ENCODE measurements at regions of chr12 and their contacts with region 1.

Region 1: GRCh38 chr12:7638760-7639555 is 26.8 kb downstream of the APOBEC1 start:
- DNase-seq: peak; percentile 77 to 86 (median 79)
- H3K4me3 ChIP-seq: peak overlapping the region; percentile 11 to 65 (median 43)
- H3K4me3 Mint-ChIP-seq: peak overlapping the region; percentile 61 to 90
- H3K27ac ChIP-seq: no peak overlapping the region
- H3K27ac Mint-ChIP-seq: peak overlapping the region; percentile 21 to 85 (median 61)
- H3K4me1 ChIP-seq: peaks cover 20 to 27% of the 10 kb centered on the region in 2 donors
- H3K4me1 Mint-ChIP-seq: peaks cover 28% of the 10 kb centered on the region
- H3K27me3 ChIP-seq: no peaks in the 10 kb centered on the region
- H3K27me3 Mint-ChIP-seq: peaks cover 0 to 5% (median 5%) of the 10 kb centered on the region in 3 donors
- CTCF ChIP-seq: peak; percentile 85

Region 2: DNA sequence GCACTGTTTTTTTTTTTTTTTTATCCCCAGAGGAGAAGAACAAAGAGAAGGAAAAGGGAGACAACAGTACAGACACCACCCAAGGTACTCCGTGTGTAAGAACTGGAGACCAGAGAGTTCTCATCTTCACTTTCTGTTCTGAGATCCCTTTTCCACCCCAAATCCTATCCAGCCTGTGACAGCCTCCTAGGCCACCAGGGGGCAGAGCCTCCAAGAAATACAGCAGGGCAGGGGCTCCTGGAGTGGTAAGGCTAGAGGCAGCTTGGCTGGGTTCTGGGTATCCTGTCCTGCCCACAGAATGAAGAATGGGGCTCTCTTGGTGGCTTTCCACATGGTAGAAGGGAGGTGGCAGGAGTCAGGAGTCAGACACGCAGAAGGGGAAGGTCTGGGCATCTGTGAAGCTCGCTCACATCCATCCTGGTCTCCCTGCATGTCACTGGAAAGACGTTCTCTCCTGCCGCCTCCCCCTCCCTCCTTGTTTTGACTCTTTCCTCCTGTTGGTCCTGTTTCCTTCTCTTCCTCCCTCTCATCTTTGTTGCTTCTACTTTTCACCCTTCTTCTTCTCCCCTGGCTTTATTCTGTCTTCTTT is 496.8 kb before region 1 on chr12:
- intact Hi-C with region 1: loop called in 1 of 2 experiments (anchors 5 kb)
- DNase-seq: peak; percentile 22 to 44 (median 37)
- H3K4me3 ChIP-seq: no peak overlapping the region
- H3K4me3 Mint-ChIP-seq: peak overlapping the region; percentile 13 to 32
- H3K27ac ChIP-seq: no peak overlapping the region
- H3K27ac Mint-ChIP-seq: peak overlapping the region in 2 of 7 donors; percentile 25 to 27
- H3K4me1 ChIP-seq: peaks cover 0 to 8% of the 10 kb centered on the region in 2 donors
- H3K4me1 Mint-ChIP-seq: peaks cover 10% of the 10 kb centered on the region
- H3K27me3 ChIP-seq: no peaks in the 10 kb centered on the region
- H3K27me3 Mint-ChIP-seq: peaks cover 0 to 1% (median 0%) of the 10 kb centered on the region in 3 donors
- CTCF ChIP-seq: peak; percentile 77

Region 3: DNA sequence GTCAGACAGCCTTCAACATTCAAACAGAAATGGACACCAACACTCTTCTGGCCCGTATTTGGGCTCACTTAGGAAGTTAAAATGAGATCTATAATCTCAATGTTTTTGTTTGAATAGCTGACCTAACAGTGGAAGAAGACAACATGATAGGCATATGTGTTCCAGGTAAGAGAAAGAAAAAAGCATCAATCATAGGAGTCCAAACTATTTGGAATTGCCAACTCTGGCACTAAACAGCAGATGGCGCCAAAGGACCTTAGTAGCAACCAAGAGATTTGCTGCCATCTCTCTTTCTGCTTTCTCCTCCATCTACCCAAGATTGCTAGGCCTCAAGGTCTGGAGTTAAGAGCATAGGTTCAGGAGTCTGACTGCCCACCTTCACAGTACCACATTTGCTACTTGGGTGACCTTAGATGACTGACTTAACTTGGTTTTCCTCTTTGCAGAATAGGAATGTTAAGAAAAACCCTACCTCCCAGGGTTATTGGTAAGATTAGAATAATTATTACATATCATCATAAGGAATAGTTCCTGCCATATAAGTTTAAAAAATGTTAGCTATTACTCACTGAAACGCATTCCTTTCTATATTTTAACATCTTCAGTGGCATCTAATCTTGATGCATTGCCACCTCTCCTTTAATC is 419.2 kb before region 1 on chr12:
- intact Hi-C with region 1: loop called (anchors 1 to 5 kb)
- DNase-seq: peak; percentile 54 to 75 (median 64)
- H3K4me3 ChIP-seq: no peak overlapping the region
- H3K4me3 Mint-ChIP-seq: no peak overlapping the region
- H3K27ac ChIP-seq: no peak overlapping the region
- H3K27ac Mint-ChIP-seq: no peak overlapping the region
- H3K4me1 ChIP-seq: no peaks in the 10 kb centered on the region
- H3K4me1 Mint-ChIP-seq: no peaks in the 10 kb centered on the region
- H3K27me3 ChIP-seq: no peaks in the 10 kb centered on the region
- H3K27me3 Mint-ChIP-seq: peaks cover 0 to 2% (median 0%) of the 10 kb centered on the region in 3 donors
- CTCF ChIP-seq: peak; percentile 85

Region 4: GRCh38 chr12:7374423-7375144 is 264.4 kb before region 1 on chr12:
- intact Hi-C with region 1: loop called in 1 of 2 experiments (anchors 5 kb)
- DNase-seq: peak; percentile 21 to 50 (median 36)
- H3K4me3 ChIP-seq: no peak overlapping the region
- H3K4me3 Mint-ChIP-seq: no peak overlapping the region
- H3K27ac ChIP-seq: no peak overlapping the region
- H3K27ac Mint-ChIP-seq: peak overlapping the region in 1 of 7 donors; percentile 57
- H3K4me1 ChIP-seq: no peaks in the 10 kb centered on the region
- H3K4me1 Mint-ChIP-seq: peaks cover 5% of the 10 kb centered on the region
- H3K27me3 ChIP-seq: no peaks in the 10 kb centered on the region
- H3K27me3 Mint-ChIP-seq: peaks cover 0 to 7% (median 0%) of the 10 kb centered on the region in 3 donors
- CTCF ChIP-seq: peak; percentile 63

Region 5: DNA sequence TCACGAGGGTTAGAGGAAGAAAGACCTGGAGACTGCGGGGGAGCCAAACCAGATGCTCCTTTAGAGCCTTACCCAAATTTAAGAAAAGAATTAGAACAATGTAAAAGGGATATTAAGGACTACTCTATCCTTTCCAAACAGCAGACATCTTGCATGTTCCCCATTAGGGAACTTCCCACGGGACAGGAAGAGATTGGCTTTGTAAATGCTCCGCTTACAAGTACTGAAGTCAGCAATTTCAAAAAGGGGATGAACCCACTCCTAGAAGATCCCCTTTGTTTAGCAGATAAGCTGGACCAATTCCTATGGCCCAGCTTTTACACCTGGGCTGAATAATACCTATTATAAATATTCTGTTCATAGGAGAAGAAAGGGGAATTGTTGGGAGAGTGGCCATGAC is 47.4 kb before region 1 on chr12:
- intact Hi-C with region 1: loop called in 1 of 2 experiments (anchors 5 kb)
- DNase-seq: no peak
- H3K4me3 ChIP-seq: no peak overlapping the region
- H3K4me3 Mint-ChIP-seq: no peak overlapping the region
- H3K27ac ChIP-seq: no peak overlapping the region
- H3K27ac Mint-ChIP-seq: no peak overlapping the region
- H3K4me1 ChIP-seq: peaks cover 9 to 10% of the 10 kb centered on the region in 2 donors
- H3K4me1 Mint-ChIP-seq: peaks cover 15% of the 10 kb centered on the region
- H3K27me3 ChIP-seq: no peaks in the 10 kb centered on the region
- H3K27me3 Mint-ChIP-seq: peaks cover 0 to 4% (median 0%) of the 10 kb centered on the region in 3 donors
- CTCF ChIP-seq: no peak

Region 6: DNA sequence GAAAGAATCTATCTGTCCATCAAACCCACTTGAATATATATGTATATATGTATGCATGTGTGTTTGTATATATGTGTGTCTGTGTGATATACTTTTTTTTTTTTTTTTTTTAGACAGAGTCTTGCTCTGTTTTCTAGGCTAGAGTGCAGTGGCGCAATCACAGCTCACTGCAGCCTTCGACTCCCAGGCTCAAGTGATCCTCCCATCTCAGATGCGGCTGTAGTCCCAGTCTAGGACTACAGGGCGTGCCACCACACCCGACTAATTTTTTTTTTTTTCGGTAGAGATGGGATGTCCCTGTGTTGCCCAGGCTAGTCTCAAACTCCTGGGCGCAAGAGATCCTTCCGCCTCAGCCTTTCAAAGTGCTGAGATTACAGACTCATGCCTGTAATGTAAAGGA is 39.8 kb after region 1 on chr12:
- intact Hi-C with region 1: no loop called
- DNase-seq: no peak
- H3K4me3 ChIP-seq: no peak overlapping the region
- H3K4me3 Mint-ChIP-seq: no peak overlapping the region
- H3K27ac ChIP-seq: no peak overlapping the region
- H3K27ac Mint-ChIP-seq: no peak overlapping the region
- H3K4me1 ChIP-seq: peaks cover 15 to 31% of the 10 kb centered on the region in 2 donors
- H3K4me1 Mint-ChIP-seq: peaks cover 33% of the 10 kb centered on the region
- H3K27me3 ChIP-seq: no peaks in the 10 kb centered on the region
- H3K27me3 Mint-ChIP-seq: no peaks in the 10 kb centered on the region
- CTCF ChIP-seq: no peak